Transverse colon (tissue), 4 donors: ENCODE measurements at regions of chr11 and their contacts with region 1.

Region 1: GRCh38 chr11:80955588-80955987 is 1514.8 kb upstream of the TENM4 start:
- DNase-seq: no peak
- H3K4me3 ChIP-seq: no peak overlapping the region
- H3K27ac ChIP-seq: no peak overlapping the region
- H3K4me1 ChIP-seq: no peaks in the 10 kb centered on the region
- H3K27me3 ChIP-seq: no peaks in the 10 kb centered on the region
- CTCF ChIP-seq: no peak
- EP300 ChIP-seq: no peak
- POLR2A ChIP-seq: no peak

Region 2: DNA sequence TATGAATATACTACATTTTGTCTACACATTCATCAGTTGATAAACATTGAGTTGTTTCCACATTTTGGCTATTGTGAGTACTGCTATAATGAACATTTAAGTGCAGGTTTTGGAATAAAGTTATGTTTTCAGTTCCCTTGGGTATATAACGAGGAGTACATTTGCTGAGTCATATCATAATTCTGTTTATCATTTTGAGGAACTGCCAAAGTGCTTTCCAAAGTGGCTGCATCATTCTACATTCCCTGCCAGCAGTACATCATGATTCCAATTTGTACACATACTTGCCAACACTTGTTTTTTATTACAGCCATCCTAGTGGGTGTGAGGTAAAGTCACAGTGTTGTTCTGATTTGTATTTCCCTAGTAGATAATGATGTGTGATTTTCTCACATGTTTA is 56.2 kb before region 1 on chr11:
- in situ Hi-C with region 1: no loop called
- intact Hi-C with region 1: loop called (anchors 2 kb)
- DNase-seq: no peak
- H3K4me3 ChIP-seq: no peak overlapping the region
- H3K27ac ChIP-seq: no peak overlapping the region
- H3K4me1 ChIP-seq: no peaks in the 10 kb centered on the region
- H3K27me3 ChIP-seq: no peaks in the 10 kb centered on the region
- CTCF ChIP-seq: no peak
- EP300 ChIP-seq: no peak
- POLR2A ChIP-seq: no peak

Region 3: GRCh38 chr11:82046778-82047177 is 1091.2 kb after region 1 on chr11:
- in situ Hi-C with region 1: no loop called
- intact Hi-C with region 1: no loop called
- DNase-seq: no peak
- H3K4me3 ChIP-seq: no peak overlapping the region
- H3K27ac ChIP-seq: no peak overlapping the region
- H3K4me1 ChIP-seq: no peaks in the 10 kb centered on the region
- H3K27me3 ChIP-seq: no peaks in the 10 kb centered on the region
- CTCF ChIP-seq: no peak
- EP300 ChIP-seq: no peak
- POLR2A ChIP-seq: no peak